ENCODE measurements at regions of chr4 and their contacts with region 1.

Region 1: DNA sequence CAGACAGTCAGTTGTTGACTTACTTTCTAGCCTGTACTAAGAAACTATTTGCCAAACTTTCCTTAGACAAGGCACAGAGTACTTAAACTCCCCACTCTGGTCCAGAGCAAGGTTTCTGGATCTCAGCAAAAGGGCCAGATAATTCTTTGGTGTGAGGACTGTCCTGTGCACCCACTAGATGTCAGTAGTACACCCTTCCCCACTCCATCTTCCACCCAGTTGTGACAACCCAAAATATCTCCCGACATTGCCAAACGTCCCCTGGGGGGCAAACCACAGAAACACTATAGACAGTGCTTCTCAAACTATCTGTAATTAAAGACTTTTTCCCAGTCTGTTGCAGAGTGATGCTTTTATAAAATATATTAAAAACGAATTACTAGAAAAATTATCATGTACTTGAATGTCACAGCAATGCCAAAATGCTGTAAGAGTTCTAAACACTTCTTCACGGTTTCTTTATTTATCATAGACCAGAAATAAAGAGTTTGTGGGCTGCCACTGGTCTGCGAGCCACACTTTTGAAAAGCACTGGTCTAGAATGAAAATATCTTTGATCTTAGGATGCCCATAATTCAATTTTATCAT is 203.5 kb downstream of the PRDM5 start:
- DNase-seq: no peak
- CTCF ChIP-seq: peak; percentile 60

Region 2: DNA sequence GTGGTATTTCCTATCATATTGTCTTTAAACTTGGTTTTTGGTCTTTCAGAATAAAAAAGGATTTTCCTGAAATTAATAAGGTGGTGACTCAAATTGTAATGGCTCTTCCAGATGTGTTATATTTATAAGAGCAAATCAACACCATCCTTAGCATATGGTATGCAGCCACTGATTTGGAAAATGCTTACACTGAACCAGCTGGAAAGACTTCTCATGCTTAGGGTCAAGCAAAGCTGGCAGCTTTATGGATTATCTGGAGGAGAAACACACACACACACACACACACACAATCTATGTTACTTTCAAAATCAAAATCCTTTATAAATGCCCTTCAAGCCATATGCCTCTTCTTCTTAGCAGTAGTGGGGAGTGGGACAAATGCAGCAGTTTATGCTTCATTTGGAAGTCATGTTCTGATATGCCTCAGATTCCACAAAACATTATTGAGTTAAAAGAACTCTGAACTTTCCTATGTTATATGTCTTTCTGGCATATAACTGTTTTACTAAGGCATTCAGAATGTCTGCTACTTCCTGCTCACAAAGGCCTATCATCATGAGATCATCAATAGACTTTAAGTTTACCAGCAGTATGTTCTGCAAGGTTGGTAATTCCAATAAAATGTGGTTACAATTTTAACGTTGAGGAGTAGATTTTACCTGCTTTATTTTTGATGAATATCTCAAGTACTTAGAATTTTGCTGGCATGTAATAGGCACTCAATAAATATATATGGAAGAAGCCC is 276.4 kb after region 1 on chr4:
- in situ Hi-C with region 1: no loop called
- DNase-seq: no peak
- CTCF ChIP-seq: no peak

Region 3: DNA sequence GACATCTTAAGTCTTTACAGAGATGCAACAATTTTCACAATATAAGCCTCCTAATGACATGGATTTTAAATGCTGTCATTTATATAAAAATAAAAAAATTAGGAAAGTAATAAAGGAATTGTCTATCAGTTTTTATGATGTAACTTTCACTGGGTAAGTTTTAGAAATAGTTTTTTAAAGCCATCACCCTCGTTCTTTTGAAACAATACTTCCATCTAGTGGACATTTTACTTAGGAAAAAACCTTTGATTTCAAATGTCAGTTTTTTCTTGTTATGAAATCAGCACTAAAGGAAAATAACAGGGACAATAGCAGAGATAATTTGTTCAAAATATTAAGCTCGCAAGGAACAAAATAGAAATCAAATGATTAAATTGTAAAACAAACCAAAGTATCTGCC is 377.6 kb after region 1 on chr4:
- in situ Hi-C with region 1: loop called (anchors 25 kb)
- DNase-seq: peak; percentile 18
- CTCF ChIP-seq: no peak